ENCODE measurements at regions of chr3 and their contacts with region 1.

Region 1: GRCh38 chr3:71305231-71306206 is 278.0 kb downstream of the FOXP1 start:
- DNase-seq: peak; percentile 70
- ATAC-seq: peak; percentile 87
- H3K4me3 ChIP-seq: peak overlapping the region; percentile 66 to 75 (median 74)
- H3K27ac ChIP-seq: peak overlapping the region; percentile 79
- H3K4me1 ChIP-seq: peaks cover 66% of the 10 kb centered on the region
- H3K27me3 ChIP-seq: no peaks in the 10 kb centered on the region
- CTCF ChIP-seq: no peak
- EP300 ChIP-seq: 0 out of 4 replicates have a peak, but pooled peaks of 1 of the 2 experiments have one; percentile 3
- POLR2A ChIP-seq: peak; percentile 21 to 52; a peak in 2 of 4 replicates
- RAD21 ChIP-seq: no peak

Region 2: GRCh38 chr3:70889162-70890019 is 416.1 kb before region 1 on chr3:
- CTCF ChIA-PET with region 1: no interaction called
- POLR2A ChIA-PET with region 1: no interaction called
- in situ Hi-C with region 1: no loop called
- intact Hi-C with region 1: no loop called
- DNase-seq: no peak
- ATAC-seq: no peak
- H3K4me3 ChIP-seq: no peak overlapping the region
- H3K27ac ChIP-seq: no peak overlapping the region
- H3K4me1 ChIP-seq: no peaks in the 10 kb centered on the region
- H3K27me3 ChIP-seq: no peaks in the 10 kb centered on the region
- CTCF ChIP-seq: no peak
- EP300 ChIP-seq: no peak
- POLR2A ChIP-seq: no peak
- RAD21 ChIP-seq: no peak

Region 3: DNA sequence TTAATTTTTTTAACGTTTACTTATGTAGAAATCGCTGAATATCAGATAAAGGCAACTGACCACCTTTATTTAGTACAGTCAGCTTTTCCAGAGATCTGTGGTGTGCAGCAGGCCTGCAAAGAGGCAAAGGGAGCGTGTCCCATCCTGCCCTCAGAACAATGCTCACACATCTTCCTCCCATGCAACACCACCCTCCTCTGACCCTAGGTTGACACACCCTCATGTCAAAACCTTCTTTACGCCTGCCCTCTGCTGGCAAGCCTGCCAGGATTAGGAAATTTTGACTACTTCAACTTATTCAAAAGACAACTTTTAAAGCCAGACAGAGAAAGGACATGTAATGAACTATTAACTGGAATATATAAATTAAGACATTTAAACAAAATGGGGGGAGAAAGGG is 235.7 kb before region 1 on chr3:
- CTCF ChIA-PET with region 1: no interaction called
- POLR2A ChIA-PET with region 1: no interaction called
- in situ Hi-C with region 1: no loop called
- intact Hi-C with region 1: loop called (anchors 5 kb)
- DNase-seq: peak; percentile 64
- ATAC-seq: peak; percentile 58
- H3K4me3 ChIP-seq: no peak overlapping the region
- H3K27ac ChIP-seq: no peak overlapping the region
- H3K4me1 ChIP-seq: peaks cover 47% of the 10 kb centered on the region
- H3K27me3 ChIP-seq: no peaks in the 10 kb centered on the region; a peak in 1 of 5 replicates
- CTCF ChIP-seq: peak; percentile 59
- EP300 ChIP-seq: no peak
- POLR2A ChIP-seq: no peak
- RAD21 ChIP-seq: peak; percentile 50; the same call in 1 of the 2 replicates

Region 4: GRCh38 chr3:71258116-71258515 is 47.4 kb before region 1 on chr3:
- CTCF ChIA-PET with region 1: no interaction called
- POLR2A ChIA-PET with region 1: no interaction called
- in situ Hi-C with region 1: no loop called
- intact Hi-C with region 1: loop called (anchors 5 kb)
- DNase-seq: peak; percentile 70
- ATAC-seq: peak; percentile 68
- H3K4me3 ChIP-seq: no peak overlapping the region
- H3K27ac ChIP-seq: peak overlapping the region; percentile 59
- H3K4me1 ChIP-seq: peaks cover 83% of the 10 kb centered on the region
- H3K27me3 ChIP-seq: no peaks in the 10 kb centered on the region
- CTCF ChIP-seq: no peak
- EP300 ChIP-seq: no peak
- POLR2A ChIP-seq: no peak
- RAD21 ChIP-seq: no peak

Measured in HepG2 (cell line).